Right ventricle myocardium superior (tissue), 1 donor: ENCODE measurements at regions of chr5 and their contacts with region 1.

Region 1: GRCh38 chr5:15794052-15794985 is 294.3 kb downstream of the FBXL7 start:
- DNase-seq: no peak
- ATAC-seq: no peak

Region 2: GRCh38 chr5:15499528-15500324 is 294.6 kb before region 1 on chr5 and contains the start of gene FBXL7:
- intact Hi-C with region 1: loop called (anchors 10 kb)
- DNase-seq: peak; percentile 89
- ATAC-seq: peak; percentile 93
- total RNA-seq, gene FBXL7: 16.2 TPM